ENCODE measurements at regions of chr19 and their contacts with region 1.

Region 1: DNA sequence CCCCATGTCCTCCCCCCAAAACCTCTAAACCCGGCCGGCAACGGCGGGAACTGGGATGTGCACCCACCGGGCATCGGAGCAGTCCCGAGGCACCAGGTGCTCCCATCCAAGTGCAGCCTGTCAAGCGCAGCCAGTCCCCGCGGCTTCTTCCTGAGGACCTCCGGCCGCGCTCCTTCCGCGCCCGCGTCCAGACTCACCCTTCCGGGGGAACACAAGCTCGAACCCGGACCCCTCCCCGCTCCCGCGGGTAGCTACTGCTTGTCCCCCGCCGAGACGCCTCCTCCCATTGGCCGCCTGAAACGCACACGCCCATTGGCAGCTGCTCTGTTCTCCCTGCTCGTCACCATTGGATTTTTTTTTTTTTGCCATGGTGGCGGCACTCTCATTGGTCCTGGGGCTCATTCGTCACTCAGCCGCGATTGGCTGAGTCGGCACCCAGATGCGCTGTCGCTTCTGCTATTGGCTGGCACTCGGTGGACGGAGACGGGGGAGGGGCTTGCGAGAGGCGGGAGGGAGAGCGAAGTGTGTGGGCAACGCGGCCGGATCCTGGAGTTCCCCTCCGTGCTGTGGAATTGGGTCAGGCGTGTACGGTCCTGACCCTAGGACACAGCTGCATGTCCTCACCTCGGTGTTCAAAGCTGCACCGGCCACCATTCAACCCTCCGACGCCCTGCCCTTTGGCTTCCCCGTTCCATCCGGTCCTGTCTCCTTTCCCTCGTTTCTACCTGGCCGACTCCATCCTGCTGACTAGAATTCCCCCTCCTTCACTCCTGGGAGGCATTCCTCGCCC is at the start of gene TYK2:
- DNase-seq: peak; percentile 96 to 99 (median 97)
- H3K4me3 ChIP-seq: peak within 1 kb of the TSS; percentile 59 to 100 (median 96)
- H3K27ac ChIP-seq: peak within 1 kb of the TSS in 58 of 59 donors; percentile 3 to 95 (median 85)
- H3K27me3 ChIP-seq: no peaks in the 10 kb centered on the region
- CTCF ChIP-seq: peak in 11 of 56 donors; percentile 3 to 52 (median 18)
- total RNA-seq, gene TYK2: 69.3 to 186 (median 118) TPM

Region 2: DNA sequence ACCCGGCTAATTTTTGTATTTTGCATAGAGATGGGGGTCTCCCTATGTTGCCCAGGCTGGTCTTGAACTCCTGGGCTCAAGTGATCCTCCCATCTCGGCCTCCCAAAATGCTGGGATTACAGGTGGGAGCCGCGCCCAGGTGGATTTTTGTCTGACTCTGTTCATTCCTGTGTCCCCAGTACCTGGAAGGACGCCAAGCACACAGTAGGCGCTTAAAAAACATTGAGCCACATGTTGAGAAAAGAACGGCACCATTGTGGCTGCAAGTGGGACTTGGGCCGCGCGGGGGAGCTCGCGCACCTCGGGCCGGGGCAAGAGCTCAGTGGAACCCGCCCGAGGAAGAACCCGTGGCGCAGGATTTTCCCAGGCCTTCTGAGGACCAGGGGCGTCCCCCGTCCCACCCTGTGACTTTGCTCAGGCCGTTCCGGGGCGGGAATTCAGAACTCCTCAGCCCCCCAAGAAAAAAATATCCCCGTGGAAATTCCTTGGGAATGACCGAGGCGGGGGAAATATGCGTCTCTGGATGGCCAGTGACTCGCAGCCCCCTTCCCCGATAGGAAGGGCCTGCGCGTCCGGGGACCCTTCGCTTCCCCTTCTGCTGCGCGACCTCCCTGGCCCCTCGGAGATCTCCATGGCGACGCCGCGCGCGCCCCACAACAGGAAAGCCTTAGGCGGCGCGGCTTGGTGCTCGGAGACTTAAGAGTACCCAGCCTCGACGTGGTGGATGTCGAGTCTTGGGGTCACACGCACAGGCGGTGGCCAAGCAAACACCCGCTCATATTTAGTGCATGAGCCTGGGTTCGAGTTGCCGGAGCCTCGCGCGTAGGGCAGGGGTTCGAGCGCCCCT is 111.0 kb before region 1 on chr19:
- intact Hi-C with region 1: no loop called
- DNase-seq: peak; percentile 62 to 86 (median 78)
- H3K4me3 ChIP-seq: peak overlapping the region; percentile 14 to 66 (median 49)
- H3K27ac ChIP-seq: peak overlapping the region in 53 of 59 donors; percentile 8 to 90 (median 68)
- H3K27me3 ChIP-seq: peaks cover 0 to 25% (median 12%) of the 10 kb centered on the region in 45 donors
- CTCF ChIP-seq: peak; percentile 83 to 97 (median 93)

Region 3: DNA sequence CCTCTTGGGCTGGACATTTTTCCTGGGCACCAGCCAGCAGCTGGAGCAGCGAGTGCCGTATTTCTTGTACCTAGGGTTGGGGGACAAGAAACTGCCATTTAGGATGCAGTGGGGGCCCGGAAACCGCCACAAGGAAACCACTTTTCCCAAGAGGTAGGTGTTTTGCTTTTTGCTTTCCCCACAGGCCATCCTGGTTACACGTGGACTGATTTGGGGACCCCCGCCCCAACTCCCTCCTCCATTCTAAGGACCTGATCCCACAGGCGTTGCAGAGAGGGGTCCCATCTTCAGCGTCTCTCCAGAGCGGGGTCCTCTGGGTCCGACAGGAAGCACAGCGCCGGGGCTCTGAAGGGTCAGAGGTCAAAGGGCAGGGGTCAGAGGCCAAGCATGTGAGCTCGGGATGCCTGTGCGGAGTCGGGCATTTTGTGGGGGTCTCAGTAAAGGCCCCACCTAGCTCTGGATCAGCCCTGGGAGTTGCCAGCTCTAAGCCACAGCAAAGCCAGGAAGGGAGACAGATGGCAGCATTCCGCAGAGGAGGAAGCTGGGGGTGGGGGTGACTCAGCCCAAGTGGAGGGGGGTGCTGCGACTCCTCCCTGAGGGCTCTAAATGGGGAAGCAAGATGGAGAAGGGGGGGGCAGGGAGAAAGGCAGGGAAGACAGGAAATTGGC is 75.2 kb before region 1 on chr19:
- intact Hi-C with region 1: loop called in 1 of 2 experiments (anchors 2 kb)
- DNase-seq: peak in 8 of 10 donors; percentile 50 to 88 (median 72)
- H3K4me3 ChIP-seq: peak overlapping the region in 6 of 59 donors; percentile 7 to 30 (median 13)
- H3K27ac ChIP-seq: peak overlapping the region in 40 of 59 donors; percentile 21 to 82 (median 60)
- H3K27me3 ChIP-seq: peaks cover 0 to 11% (median 0%) of the 10 kb centered on the region in 45 donors
- CTCF ChIP-seq: no peak

Region 4: DNA sequence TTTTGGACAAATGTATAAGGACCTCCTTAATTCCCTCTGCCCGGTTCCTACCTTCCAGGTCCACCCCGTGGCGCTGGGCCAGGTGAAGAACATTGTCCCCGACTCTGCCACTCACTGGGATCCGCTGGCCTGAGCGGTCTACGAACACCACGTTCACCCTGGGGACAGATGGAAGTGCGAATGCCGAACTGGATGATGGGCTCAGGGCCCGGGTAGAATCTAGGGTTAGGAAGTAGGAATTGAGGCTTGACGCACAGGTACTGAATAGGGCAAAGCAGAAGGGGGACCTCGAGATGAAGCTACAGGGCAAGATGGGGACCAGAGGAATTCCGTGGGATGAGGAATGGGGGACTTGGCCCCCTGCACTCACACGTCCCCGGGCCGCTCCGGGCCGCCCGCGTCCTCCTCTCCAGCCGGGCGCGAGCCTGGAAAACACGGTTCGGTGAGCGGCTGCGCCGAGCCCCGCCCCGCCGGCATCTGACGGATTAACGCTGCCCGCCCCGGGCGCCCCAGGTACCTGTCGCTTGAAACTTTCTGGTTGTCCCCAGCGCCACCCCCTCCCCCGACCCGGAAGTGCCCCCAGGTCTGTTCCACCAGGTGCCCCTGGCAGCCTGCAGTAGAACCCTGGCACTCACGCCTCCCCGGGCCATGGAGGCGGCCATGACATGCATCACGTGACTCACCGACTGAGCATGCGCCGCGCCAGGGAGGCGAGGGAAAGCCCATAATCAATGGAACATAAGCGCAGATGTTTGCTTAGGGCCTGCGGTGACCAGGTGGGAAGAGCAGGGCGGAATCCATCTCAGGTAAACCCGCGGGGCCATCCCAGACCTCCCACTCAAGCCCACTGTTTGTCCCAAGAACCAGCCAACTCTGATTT is 64.9 kb before region 1 on chr19 and contains the start of gene FDX2:
- intact Hi-C with region 1: loop called in 1 of 2 experiments (anchors 5 kb)
- DNase-seq: peak; percentile 80 to 93 (median 91)
- H3K4me3 ChIP-seq: peak within 1 kb of the TSS; percentile 63 to 97 (median 90)
- H3K27ac ChIP-seq: peak within 1 kb of the TSS in 52 of 59 donors; percentile 12 to 89 (median 68)
- H3K27me3 ChIP-seq: no peaks in the 10 kb centered on the region
- CTCF ChIP-seq: peak in 14 of 56 donors; percentile 7 to 42 (median 27)
- total RNA-seq, gene FDX2: 29.3 to 73.6 (median 49.2) TPM

Region 5: DNA sequence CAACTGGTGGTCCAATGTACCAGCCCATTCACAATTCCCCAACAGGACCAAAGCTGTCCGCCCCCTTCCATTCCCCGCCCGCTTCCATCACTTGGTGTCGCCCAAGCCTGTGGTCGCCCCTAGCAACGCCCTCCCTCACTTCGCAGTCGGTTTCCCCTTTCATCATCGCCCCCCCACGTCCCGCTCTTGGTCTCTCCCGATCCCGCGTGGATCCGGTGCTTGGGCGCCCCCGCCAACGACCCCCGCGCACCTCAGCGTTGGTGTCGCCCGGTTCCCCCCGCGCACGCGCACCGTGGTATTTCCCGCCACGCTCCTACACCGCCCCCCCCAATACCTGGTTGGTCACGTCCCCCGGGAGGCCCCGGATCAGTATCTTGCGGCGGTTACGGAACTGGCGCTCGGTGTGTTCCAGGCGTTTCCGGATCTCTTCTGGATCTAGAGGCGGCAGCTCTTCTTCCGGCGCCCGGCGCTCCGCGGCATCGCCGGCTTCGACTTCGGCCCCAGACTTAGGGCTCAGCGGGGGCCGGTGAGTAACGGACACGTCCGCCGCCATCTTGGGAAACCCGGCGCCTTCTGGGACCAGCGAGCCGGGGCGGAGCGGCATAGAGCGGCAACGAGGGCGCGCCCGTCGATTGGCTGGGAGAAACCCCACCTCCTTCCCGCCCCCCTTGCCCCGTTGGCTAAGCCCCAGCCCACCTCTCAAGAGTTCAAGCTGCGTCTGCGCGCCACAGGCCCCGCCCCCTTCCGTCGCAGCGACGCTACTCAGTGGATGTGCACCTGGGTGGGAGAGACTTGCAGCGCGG is 47.4 kb before region 1 on chr19 and contains the start of gene RAVER1:
- intact Hi-C with region 1: loop called (anchors 2 to 5 kb)
- DNase-seq: peak; percentile 95 to 99 (median 98)
- H3K4me3 ChIP-seq: peak within 1 kb of the TSS; percentile 64 to 93 (median 83)
- H3K27ac ChIP-seq: peak within 1 kb of the TSS; percentile 76 to 99 (median 95)
- H3K27me3 ChIP-seq: no peaks in the 10 kb centered on the region
- CTCF ChIP-seq: peak in 14 of 56 donors; percentile 1 to 55 (median 16)
- total RNA-seq, gene RAVER1: 14.3 to 30.3 (median 19.9) TPM

Region 6: DNA sequence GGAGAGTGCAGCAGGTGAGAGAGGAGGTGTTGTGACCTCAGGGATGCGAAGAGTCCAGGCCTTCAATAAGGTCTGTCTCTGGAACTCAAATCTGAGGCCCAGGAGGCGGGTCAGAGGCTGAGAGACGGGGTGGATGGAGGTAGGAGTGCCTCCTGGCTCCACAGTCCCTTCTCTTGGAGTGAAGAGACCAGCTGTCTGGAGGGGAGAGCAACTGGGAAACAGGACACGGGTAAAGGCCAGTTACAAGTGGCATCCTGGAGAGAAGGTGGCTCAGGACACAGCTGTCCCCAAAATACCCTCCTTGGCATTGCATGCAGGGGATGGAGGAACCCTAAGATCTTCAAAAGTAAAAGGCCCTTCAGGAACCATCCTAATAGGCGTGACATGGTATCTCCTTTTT is 59.1 kb after region 1 on chr19:
- intact Hi-C with region 1: no loop called
- DNase-seq: no peak
- H3K4me3 ChIP-seq: no peak overlapping the region
- H3K27ac ChIP-seq: no peak overlapping the region
- H3K27me3 ChIP-seq: peaks cover 0 to under 1% (median 0%) of the 10 kb centered on the region in 45 donors
- CTCF ChIP-seq: no peak

Measured in dorsolateral prefrontal cortex (tissue), 120 donors.